Activated CD4-positive, alpha-beta T cell treated with anti-CD3 and anti-CD28 coated beads for 36 hours (primary cell): ENCODE measurements at regions of chr7 and their contacts with region 1.

Region 1: GRCh38 chr7:155644178-155644970 is at the start of gene RBM33:
- DNase-seq: peak; percentile 89
- ATAC-seq: peak; percentile 92
- H3K4me3 Mint-ChIP-seq: peak within 1 kb of the TSS; percentile 96
- H3K27ac Mint-ChIP-seq: peak within 1 kb of the TSS; percentile 100
- H3K4me1 Mint-ChIP-seq: peaks cover 44% of the 10 kb centered on the region
- H3K27me3 Mint-ChIP-seq: no peaks in the 10 kb centered on the region
- total RNA-seq, gene RBM33: 67.6 to 81.1 TPM

Region 2: DNA sequence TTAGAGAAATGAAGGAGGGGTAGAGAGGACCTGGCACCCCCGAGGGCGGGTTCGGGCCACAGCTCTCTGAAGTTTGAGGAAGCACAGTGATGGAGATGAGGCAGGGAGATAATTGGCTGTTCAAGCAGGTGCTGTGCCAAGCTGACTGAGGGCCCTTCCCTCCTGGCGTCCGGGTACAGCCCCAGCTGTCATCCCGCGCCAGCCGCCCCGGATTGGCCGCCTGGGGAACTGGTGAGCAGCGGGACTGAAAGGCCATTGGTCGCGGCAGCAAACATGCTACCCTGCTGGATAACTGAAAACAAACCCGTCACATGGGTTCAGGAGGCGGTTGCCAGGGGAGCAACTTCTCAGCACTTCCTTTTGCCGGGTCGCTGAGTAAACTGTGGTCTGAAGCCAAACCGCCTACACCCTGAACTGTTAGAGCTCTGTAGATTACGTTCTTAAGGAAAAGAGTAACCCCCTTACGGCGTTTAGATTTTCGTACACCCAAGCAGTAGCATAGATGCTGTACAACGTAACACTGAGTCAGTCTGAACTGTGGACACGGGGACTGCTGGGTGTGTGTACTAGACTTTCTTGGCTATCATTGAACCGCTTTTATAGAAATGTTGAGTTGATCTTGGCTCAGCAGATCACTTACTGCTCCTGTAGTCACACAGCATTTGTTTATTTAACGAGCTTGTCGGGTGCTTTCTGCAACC is 345.4 kb before region 1 on chr7:
- CTCF ChIA-PET with region 1: no interaction called
- POLR2A ChIA-PET with region 1: no interaction called
- intact Hi-C with region 1: loop called in 1 of 2 experiments (anchors 1 kb)
- DNase-seq: peak; percentile 98
- ATAC-seq: peak; percentile 83
- H3K4me3 Mint-ChIP-seq: peak overlapping the region; percentile 96
- H3K27ac Mint-ChIP-seq: peak overlapping the region; percentile 93
- H3K4me1 Mint-ChIP-seq: peaks cover 33% of the 10 kb centered on the region
- H3K27me3 Mint-ChIP-seq: no peaks in the 10 kb centered on the region

Region 3: DNA sequence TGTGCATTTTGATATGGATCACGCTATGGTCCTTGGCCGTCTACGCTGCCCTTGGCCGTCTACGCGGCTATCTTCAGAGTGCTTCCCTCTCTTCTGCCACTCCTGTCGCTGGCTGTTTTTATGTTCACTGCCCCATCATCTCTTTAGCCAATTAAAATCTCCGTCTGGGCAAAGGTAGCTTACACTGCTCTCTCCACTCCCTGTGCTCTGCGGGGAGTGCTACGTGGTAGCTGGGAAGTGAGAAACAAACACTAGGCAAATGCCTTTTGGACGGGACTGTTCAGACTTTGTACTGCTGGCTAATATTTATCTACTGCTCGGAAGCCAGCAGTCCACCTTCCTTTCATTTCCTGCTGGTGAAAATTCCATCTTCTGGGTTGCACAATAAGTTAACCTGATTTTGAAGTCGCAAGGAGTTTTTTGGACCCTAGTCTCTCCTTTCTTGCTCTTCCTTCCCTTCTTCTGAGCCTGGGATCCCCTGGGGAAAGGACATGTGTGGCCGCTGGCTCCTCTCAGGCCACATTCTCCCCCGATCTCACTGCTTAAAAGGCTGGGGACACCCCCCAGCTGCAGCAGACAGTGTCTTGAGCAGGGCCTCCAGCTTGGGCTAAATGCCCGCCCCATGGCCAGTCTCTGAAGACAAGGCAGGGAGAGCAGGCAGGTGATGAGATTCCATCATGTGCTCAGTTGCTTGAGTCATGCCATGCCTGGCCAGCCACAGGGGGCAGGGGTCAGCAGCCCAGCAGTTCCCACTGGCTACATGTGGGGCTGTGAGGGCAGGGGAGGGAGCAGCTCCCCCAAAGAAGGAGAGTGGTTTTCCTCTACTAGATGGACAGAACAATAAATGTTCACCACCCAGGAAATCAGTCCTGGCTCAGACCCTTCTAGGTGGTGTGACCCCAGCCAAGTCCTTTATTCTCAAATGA is 25.4 kb before region 1 on chr7:
- CTCF ChIA-PET with region 1: no interaction called
- POLR2A ChIA-PET with region 1: no interaction called
- intact Hi-C with region 1: no loop called
- DNase-seq: no peak
- ATAC-seq: no peak
- H3K4me3 Mint-ChIP-seq: no peak overlapping the region
- H3K27ac Mint-ChIP-seq: no peak overlapping the region
- H3K4me1 Mint-ChIP-seq: no peaks in the 10 kb centered on the region
- H3K27me3 Mint-ChIP-seq: peaks cover 3% of the 10 kb centered on the region

Region 4: DNA sequence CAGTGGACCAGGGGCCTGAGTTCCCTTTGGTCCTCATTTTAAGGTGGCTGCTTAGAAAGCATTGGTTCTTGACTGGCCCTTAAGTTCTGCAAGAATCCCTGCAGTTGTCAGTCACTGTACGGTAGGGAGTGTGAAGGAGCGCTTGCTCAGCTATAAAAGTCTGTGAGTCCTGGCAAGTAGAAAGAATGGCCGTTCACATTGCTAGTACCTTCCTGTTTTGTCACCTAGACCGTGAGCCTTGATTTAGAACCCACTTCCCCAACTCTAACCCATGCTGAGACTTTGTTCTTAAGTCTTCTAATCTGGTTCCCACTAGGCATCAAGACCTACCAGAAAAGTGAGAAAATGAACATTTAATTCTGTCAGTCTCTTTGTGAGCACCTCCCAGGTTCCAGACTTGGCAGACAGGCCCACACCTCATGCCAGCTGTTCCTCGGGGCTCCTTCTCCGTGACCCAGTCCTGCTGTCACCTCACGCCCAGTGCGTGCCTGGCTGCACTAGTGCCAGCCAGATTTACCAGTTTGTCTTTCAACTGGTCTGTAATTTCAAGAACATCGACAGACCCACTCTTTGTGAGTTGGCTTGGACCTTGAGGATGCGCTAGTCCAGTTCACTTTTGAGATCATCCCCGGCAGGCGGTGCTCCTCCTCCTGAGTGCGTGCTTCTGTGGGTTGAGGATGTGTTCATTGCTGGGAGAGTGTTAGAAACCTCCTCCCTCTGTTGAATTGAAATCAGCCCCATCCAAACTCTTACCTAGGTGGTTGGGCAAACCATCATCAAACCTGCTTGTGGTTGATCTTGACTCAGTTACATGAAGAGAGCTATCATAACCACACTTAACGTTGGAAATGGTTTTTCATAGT is 89.4 kb after region 1 on chr7:
- CTCF ChIA-PET with region 1: no interaction called
- POLR2A ChIA-PET with region 1: interaction called, 3 read pairs
- intact Hi-C with region 1: loop called (anchors 1 to 10 kb)
- DNase-seq: peak; percentile 62
- ATAC-seq: peak; percentile 82
- H3K4me3 Mint-ChIP-seq: no peak overlapping the region
- H3K27ac Mint-ChIP-seq: peak overlapping the region; percentile 79
- H3K4me1 Mint-ChIP-seq: peaks cover 70% of the 10 kb centered on the region
- H3K27me3 Mint-ChIP-seq: no peaks in the 10 kb centered on the region

Region 5: GRCh38 chr7:155961241-155962190 is 317.1 kb after region 1 on chr7:
- CTCF ChIA-PET with region 1: no interaction called
- POLR2A ChIA-PET with region 1: no interaction called
- intact Hi-C with region 1: loop called in 1 of 2 experiments (anchors 10 kb)
- DNase-seq: peak; percentile 68
- ATAC-seq: peak; percentile 27
- H3K4me3 Mint-ChIP-seq: no peak overlapping the region
- H3K27ac Mint-ChIP-seq: peak overlapping the region; percentile 14
- H3K4me1 Mint-ChIP-seq: peaks cover 28% of the 10 kb centered on the region
- H3K27me3 Mint-ChIP-seq: peaks cover 18% of the 10 kb centered on the region

Region 6: DNA sequence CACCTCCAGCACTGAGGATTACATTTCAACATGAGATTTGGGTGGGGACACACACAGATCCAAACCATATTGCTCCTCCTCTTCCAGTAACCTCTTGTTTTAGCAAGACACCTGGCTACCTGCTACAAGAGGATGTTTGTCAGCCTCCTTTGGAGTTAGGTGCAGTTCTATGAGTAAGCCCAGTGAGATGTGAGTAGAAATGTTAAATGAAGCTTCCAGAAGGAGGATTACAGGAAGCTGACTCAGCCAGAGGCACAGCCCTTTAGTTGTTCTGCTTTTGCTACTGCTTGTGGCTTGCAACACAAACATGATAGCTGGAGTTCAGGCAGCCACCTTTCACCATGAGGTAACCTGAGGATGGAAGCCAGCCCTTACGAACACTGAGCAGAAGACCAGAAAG is 613.5 kb after region 1 on chr7:
- CTCF ChIA-PET with region 1: no interaction called
- POLR2A ChIA-PET with region 1: no interaction called
- intact Hi-C with region 1: no loop called
- DNase-seq: no peak
- ATAC-seq: peak; percentile 70
- H3K4me3 Mint-ChIP-seq: no peak overlapping the region
- H3K27ac Mint-ChIP-seq: no peak overlapping the region
- H3K4me1 Mint-ChIP-seq: no peaks in the 10 kb centered on the region
- H3K27me3 Mint-ChIP-seq: peaks cover 12% of the 10 kb centered on the region

Region 7: DNA sequence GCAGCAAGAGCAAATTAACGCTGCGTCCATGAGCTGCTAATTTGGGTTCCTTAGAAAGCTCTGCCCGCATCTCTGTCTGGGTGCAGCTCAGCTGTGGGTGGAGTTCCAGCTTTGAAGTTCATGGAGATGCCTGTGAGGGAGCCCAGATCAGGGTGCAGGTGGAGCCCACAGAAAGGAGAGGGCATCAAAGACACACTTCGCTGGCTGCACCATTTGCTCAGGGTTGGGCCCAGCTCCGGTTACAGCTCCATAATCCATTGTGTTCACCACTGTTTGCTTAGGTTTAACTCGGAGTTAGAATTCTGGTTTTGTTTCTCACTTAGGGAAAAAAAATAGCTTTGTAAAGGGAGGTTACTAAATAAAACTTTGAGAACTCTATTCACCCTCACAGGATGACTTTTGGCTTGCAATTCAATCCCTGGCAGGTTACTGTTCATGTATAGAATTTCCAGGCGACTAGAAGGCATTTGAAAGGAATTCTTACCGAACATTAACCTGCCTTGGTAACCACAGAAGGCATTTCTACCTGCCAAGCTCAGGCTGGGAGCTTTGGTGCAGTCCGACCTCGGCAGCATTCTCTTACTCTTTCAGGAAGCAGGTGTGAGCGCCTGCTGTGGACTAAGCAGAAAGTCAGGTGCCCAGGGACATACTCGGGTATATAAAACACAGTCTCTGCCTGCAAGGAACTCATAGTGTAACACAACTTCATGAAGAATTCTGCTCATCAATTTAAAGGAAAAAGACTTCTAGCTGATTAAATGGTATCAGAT is 816.7 kb after region 1 on chr7:
- CTCF ChIA-PET with region 1: no interaction called
- POLR2A ChIA-PET with region 1: no interaction called
- intact Hi-C with region 1: no loop called
- DNase-seq: no peak
- ATAC-seq: no peak
- H3K4me3 Mint-ChIP-seq: no peak overlapping the region
- H3K27ac Mint-ChIP-seq: no peak overlapping the region
- H3K4me1 Mint-ChIP-seq: no peaks in the 10 kb centered on the region
- H3K27me3 Mint-ChIP-seq: peaks cover 16% of the 10 kb centered on the region

Region 8: GRCh38 chr7:156892821-156893706 is 1248.7 kb after region 1 on chr7 and contains the start of gene LMBR1:
- CTCF ChIA-PET with region 1: no interaction called
- POLR2A ChIA-PET with region 1: no interaction called
- intact Hi-C with region 1: loop called in 1 of 2 experiments (anchors 2 kb)
- DNase-seq: peak; percentile 97
- ATAC-seq: peak; percentile 89
- H3K4me3 Mint-ChIP-seq: peak within 1 kb of the TSS; percentile 88
- H3K27ac Mint-ChIP-seq: peak within 1 kb of the TSS; percentile 90
- H3K4me1 Mint-ChIP-seq: peaks cover 38% of the 10 kb centered on the region
- H3K27me3 Mint-ChIP-seq: no peaks in the 10 kb centered on the region
- total RNA-seq, gene LMBR1: 31.0 to 39.0 TPM